Aorta (tissue), 5 donors: ENCODE measurements at regions of chr5 and their contacts with region 1.

Region 1: DNA sequence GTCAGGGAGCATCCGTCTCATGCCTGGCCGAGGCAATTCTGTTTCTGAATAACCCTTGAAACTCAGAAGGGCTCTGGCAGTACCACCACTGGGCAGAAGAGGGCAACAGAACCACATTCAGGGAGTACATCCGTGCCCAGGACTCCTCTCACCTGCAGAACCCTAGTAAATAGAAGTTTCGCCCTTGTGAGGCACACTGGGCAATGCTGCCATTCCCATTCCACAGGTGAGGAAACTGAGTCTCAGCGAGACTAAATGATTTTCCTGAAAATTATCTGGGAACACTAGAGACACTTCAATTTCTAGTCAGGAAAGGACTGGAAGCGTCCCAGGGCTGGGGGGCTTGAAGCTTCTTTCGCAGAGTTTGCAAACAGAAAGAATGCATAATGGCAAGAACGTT is 74.7 kb downstream of the FGF1 start:
- DNase-seq: peak; percentile 76 to 89
- ATAC-seq: peak; percentile 82
- H3K4me3 ChIP-seq: no peak overlapping the region
- H3K27ac ChIP-seq: no peak overlapping the region
- H3K4me1 ChIP-seq: peaks cover 2 to 3% of the 10 kb centered on the region in 2 donors
- H3K27me3 ChIP-seq: no peaks in the 10 kb centered on the region

Region 2: GRCh38 chr5:142655339-142656267 is 44.4 kb after region 1 on chr5:
- intact Hi-C with region 1: loop called (anchors 2 kb)
- DNase-seq: peak; percentile 87 to 94
- ATAC-seq: peak; percentile 94
- H3K4me3 ChIP-seq: no peak overlapping the region
- H3K27ac ChIP-seq: peak overlapping the region in 1 of 2 donors; percentile 37
- H3K4me1 ChIP-seq: no peaks in the 10 kb centered on the region
- H3K27me3 ChIP-seq: no peaks in the 10 kb centered on the region

Region 3: DNA sequence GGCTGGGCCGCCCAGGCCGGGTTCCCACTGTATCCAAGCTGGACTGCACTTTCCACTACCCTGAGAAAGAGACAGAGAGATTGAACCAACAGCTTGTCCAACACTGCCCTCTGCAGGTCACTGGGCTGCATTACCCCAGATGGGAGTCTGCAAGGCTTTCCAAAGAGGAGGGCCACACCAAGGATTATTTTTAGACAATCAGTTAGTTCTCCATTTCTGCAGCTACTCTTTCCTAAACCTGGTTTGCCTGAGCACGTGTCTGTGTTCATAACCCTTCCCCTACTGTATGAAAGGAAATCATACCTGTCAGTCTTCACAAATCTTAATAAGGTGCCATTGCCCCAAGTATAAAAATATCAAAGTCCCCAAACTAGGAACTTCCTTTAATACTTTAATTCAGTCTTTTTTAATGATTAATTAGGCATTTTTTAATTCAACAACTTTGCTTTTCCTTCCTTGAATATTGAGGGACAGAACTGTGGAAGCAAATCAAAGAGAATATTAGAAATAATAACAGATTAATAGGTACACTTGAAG is 88.1 kb after region 1 on chr5:
- intact Hi-C with region 1: loop called (anchors 2 kb)
- DNase-seq: peak; percentile 92 to 94
- ATAC-seq: peak; percentile 96
- H3K4me3 ChIP-seq: no peak overlapping the region
- H3K27ac ChIP-seq: no peak overlapping the region
- H3K4me1 ChIP-seq: peaks cover 0 to 8% of the 10 kb centered on the region in 2 donors
- H3K27me3 ChIP-seq: no peaks in the 10 kb centered on the region

Region 4: GRCh38 chr5:142894749-142895148 is 283.6 kb after region 1 on chr5:
- intact Hi-C with region 1: loop called in 1 of 2 experiments (anchors 5 kb)
- DNase-seq: no peak
- ATAC-seq: peak; percentile 41
- H3K4me3 ChIP-seq: no peak overlapping the region
- H3K27ac ChIP-seq: no peak overlapping the region
- H3K4me1 ChIP-seq: no peaks in the 10 kb centered on the region
- H3K27me3 ChIP-seq: no peaks in the 10 kb centered on the region